ENCODE measurements at regions of chr17 and their contacts with region 1.

Region 1: DNA sequence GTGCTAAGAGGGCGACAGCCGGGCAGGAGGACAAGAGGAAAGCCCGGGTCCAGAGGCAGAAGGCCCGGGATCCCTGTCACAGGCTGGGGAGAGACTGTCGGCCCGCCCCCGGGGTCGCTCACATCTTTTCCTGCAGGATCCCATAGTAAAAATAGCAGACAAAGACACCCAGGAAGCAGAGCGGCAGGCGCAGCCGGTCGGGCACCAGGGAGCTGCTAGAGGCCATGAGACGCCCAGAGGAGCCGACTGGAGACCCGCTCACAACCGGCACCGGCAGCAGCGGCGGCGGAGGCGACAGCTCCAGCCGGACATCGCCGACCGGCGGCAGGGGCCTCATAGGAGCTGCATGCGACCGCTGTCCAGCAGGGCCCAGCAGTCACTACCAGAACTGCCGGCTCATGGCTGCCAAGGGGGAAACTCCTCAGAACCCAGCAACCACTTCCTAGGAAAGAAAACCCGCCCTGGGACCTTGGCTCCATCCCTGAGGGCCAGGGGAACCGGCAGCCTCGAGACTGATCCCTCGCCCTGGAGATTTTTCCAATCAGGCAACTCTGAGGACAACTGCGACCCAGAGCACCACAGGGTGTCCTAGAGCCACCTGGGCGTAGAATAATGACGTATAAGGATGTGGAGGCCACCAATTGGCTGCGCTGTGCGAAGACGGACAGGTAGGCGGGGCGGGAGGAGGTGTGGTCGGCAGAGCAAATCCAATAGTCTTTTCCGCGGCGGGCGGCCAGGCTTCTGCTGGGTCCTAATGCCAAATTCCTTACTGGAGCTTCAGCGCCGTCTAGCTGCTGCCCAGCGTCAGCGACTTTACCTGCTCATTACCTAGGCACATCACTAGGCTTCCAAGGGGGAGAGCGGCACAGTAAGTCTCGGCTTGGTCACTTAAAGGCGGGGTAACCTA is at the start of gene SLC35B1:
- DNase-seq: peak; percentile 99
- H3K4me3 Mint-ChIP-seq: peak within 1 kb of the TSS; percentile 90
- H3K27ac Mint-ChIP-seq: peak within 1 kb of the TSS; percentile 93
- H3K4me1 Mint-ChIP-seq: peaks cover 57% of the 10 kb centered on the region
- H3K27me3 Mint-ChIP-seq: no peaks in the 10 kb centered on the region
- total RNA-seq, gene SLC35B1: 50.4 TPM

Region 2: DNA sequence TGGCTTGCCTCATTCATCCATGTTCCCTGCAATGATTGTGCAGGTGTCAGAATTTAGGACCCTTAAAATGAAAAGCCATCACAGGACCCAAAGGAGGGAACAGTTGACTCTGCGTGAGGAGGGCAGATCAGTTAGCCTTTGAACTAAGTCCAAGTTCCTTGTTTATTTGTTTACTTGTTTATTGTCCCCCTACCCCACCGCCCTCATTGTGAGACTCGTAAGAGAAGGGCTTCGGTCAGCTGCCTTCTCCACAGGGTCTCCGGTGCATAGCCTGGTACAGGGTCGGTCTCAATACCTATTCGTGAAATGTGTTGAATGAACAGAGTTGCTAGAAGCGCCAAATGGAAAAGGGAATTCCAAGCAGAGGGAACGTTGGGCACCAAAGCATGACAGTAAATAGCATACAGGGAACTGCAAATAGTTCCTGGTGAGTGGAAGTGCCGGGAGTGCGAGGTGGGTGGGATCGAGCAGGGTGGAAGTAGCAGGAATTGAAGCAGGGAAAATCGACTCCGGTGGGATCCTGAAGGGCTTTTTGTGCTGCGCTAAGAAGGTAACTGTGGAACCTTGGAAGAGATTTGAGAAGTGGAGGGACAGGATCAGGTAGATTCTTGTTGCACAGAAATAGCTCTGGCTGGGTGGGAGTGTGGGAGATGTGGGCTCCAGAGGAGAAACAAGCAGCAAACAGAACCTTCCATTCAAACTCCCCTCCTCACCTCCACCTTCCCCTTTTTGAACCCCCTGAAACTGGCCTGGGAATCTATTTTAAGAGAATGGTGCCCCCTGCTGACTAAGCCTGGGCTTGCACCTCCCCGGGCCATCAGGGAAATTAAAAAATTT is 12.8 kb before region 1 on chr17:
- CTCF ChIA-PET with region 1: interaction called, 19 read pairs
- POLR2A ChIA-PET with region 1: interaction called, 42 read pairs
- DNase-seq: peak; percentile 75
- H3K4me3 Mint-ChIP-seq: no peak overlapping the region
- H3K27ac Mint-ChIP-seq: peak overlapping the region; percentile 77
- H3K4me1 Mint-ChIP-seq: peaks cover 25% of the 10 kb centered on the region
- H3K27me3 Mint-ChIP-seq: no peaks in the 10 kb centered on the region

Region 3: GRCh38 chr17:49739641-49740271 is 31.9 kb after region 1 on chr17:
- CTCF ChIA-PET with region 1: interaction called, 16 read pairs
- POLR2A ChIA-PET with region 1: interaction called, 100 read pairs
- DNase-seq: peak; percentile 95
- H3K4me3 Mint-ChIP-seq: peak overlapping the region; percentile 94
- H3K27ac Mint-ChIP-seq: peak overlapping the region; percentile 100
- H3K4me1 Mint-ChIP-seq: peaks cover 77% of the 10 kb centered on the region
- H3K27me3 Mint-ChIP-seq: no peaks in the 10 kb centered on the region

Region 4: GRCh38 chr17:49763735-49764558 is 56.1 kb after region 1 on chr17 and contains the start of gene FAM117A:
- CTCF ChIA-PET with region 1: interaction called, 38 read pairs
- POLR2A ChIA-PET with region 1: interaction called, 59 read pairs
- DNase-seq: peak; percentile 99
- H3K4me3 Mint-ChIP-seq: peak within 1 kb of the TSS; percentile 93
- H3K27ac Mint-ChIP-seq: peak within 1 kb of the TSS; percentile 78
- H3K4me1 Mint-ChIP-seq: peaks cover 54% of the 10 kb centered on the region
- H3K27me3 Mint-ChIP-seq: peaks cover 31% of the 10 kb centered on the region
- total RNA-seq, gene FAM117A: 61.0 to 62.0 TPM

Region 5: GRCh38 chr17:49815761-49816281 is 108.0 kb after region 1 on chr17:
- CTCF ChIA-PET with region 1: interaction called, 12 read pairs
- POLR2A ChIA-PET with region 1: interaction called, 16 read pairs
- DNase-seq: no peak
- H3K4me3 Mint-ChIP-seq: no peak overlapping the region
- H3K27ac Mint-ChIP-seq: peak overlapping the region; percentile 58
- H3K4me1 Mint-ChIP-seq: peaks cover 69% of the 10 kb centered on the region
- H3K27me3 Mint-ChIP-seq: no peaks in the 10 kb centered on the region

Measured in activated CD4-positive, alpha-beta memory T cell treated with anti-CD3 and anti-CD28 coated beads, Interleukin-2, amount 10 ng/mL, durations not matched to agents 7 days and 5 days (primary cell).